WTC11 (cell line): ENCODE measurements at regions of chr20 and their contacts with region 1.

Region 1: DNA sequence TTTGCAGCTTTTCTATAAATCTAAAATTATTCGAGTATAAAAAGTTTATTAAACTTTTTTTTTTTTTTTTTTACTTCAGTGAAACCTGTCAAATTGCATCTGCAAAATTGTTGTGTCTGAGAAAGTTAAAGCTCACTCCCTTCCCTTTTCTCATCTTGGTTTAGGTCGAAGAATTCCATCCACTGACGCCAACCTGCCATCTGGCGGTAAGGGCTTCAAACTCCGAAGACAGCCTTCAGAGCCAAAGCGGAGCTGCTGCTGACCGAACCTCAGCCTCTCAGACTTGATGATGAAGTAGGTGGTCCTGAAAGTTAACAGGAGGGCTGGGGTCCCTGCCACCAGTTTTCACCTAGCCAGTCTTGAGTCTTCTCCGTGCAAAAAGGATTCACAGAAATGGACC is 29.6 kb upstream of the VAPB start:
- DNase-seq: peak; percentile 43
- ATAC-seq: peak; percentile 16; the same call in 1 of the 2 replicates
- H3K4me3 Mint-ChIP-seq: no peak overlapping the region
- H3K27ac Mint-ChIP-seq: no peak overlapping the region
- H3K4me1 Mint-ChIP-seq: no peaks in the 10 kb centered on the region
- H3K27me3 Mint-ChIP-seq: no peaks in the 10 kb centered on the region
- CTCF ChIP-seq: no peak

Region 2: GRCh38 chr20:58342104-58342960 is 17.1 kb before region 1 on chr20:
- CTCF ChIA-PET with region 1: interaction called, 11 read pairs
- POLR2A ChIA-PET with region 1: no interaction called
- DNase-seq: no peak
- ATAC-seq: no peak
- H3K4me3 Mint-ChIP-seq: no peak overlapping the region
- H3K27ac Mint-ChIP-seq: no peak overlapping the region
- H3K4me1 Mint-ChIP-seq: peaks cover 28% of the 10 kb centered on the region
- H3K27me3 Mint-ChIP-seq: no peaks in the 10 kb centered on the region
- CTCF ChIP-seq: no peak

Region 3: DNA sequence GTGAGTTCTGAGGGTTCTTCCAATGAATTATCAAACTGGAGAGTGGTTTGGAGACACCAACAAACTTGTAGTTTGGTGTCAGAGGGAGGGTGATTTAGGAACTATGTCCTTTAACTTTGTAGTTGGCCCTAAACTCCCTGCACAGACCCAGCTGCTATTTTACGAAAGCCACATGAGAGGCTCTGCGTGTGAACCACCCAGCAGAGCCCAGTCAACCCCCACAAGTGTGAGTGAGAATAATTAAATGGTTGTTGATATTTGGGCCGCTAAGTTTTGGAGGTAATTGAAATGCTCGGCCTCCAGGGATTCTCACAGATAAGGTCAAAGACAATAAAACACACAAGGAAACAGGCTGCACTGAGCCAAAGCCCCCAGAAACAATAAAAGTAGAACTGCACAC is 22.7 kb after region 1 on chr20:
- CTCF ChIA-PET with region 1: no interaction called
- POLR2A ChIA-PET with region 1: no interaction called
- DNase-seq: no peak
- ATAC-seq: no peak
- H3K4me3 Mint-ChIP-seq: no peak overlapping the region
- H3K27ac Mint-ChIP-seq: no peak overlapping the region
- H3K4me1 Mint-ChIP-seq: peaks cover 25% of the 10 kb centered on the region
- H3K27me3 Mint-ChIP-seq: peaks cover 24% of the 10 kb centered on the region
- CTCF ChIP-seq: no peak